MCF 10A (cell line): ENCODE measurements at regions of chr5 and their contacts with region 1.

Region 1: GRCh38 chr5:149035372-149035790 is 27.5 kb downstream of the SH3TC2 start:
- DNase-seq: peak; percentile 87
- H3K4me3 Mint-ChIP-seq: no peak overlapping the region
- H3K27ac Mint-ChIP-seq: no peak overlapping the region
- H3K4me1 Mint-ChIP-seq: peaks cover 17% of the 10 kb centered on the region
- H3K27me3 Mint-ChIP-seq: no peaks in the 10 kb centered on the region
- CTCF ChIP-seq: peak; percentile 96

Region 2: GRCh38 chr5:148740966-148741742 is 294.2 kb before region 1 on chr5:
- CTCF ChIA-PET with region 1: interaction called, 882 read pairs
- POLR2A ChIA-PET with region 1: interaction called, 31 read pairs
- intact Hi-C with region 1: loop called (anchors 1 kb)
- DNase-seq: peak; percentile 77
- H3K4me3 Mint-ChIP-seq: no peak overlapping the region
- H3K27ac Mint-ChIP-seq: no peak overlapping the region
- H3K4me1 Mint-ChIP-seq: peaks cover 5% of the 10 kb centered on the region
- H3K27me3 Mint-ChIP-seq: no peaks in the 10 kb centered on the region
- CTCF ChIP-seq: peak; percentile 88

Region 3: GRCh38 chr5:148826053-148826738 is 209.2 kb before region 1 on chr5 and contains the start of gene ADRB2:
- CTCF ChIA-PET with region 1: interaction called, 38 read pairs
- POLR2A ChIA-PET with region 1: interaction called, 7 read pairs
- intact Hi-C with region 1: no loop called
- DNase-seq: peak; percentile 99
- H3K4me3 Mint-ChIP-seq: peak within 1 kb of the TSS; percentile 90
- H3K27ac Mint-ChIP-seq: peak within 1 kb of the TSS; percentile 91
- H3K4me1 Mint-ChIP-seq: peaks cover 44% of the 10 kb centered on the region
- H3K27me3 Mint-ChIP-seq: no peaks in the 10 kb centered on the region
- CTCF ChIP-seq: no peak
- total RNA-seq, gene ADRB2: 6.9 and 9.5 TPM in 2 replicates

Region 4: DNA sequence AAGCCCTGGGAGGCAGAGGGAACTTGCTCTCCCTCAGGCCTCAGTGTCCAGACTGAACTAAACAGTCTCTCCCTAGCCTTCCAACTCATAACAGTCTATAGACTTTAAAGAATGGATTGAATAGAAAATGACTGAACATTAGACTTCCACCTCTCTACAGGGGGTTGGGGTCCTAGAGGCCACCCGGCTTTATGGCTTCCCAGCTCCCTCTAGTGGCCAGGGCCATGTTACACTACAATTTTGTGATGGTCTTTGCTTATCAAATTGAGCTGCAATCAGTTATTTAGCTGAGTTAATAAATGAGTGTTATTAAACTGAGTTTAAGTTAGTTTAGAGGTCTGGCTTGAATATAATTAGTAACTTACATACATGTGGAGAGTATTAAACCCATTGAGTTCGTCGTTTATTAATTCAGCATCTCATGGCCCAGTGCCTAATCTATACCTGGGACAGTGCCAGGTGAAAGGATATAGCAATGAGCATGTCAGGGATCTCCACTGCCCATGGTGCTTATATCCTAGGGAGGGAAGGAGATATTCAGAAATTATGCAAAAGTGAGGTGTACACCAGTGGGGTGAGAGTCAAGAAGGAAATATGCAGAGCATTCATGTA is 77.7 kb before region 1 on chr5:
- CTCF ChIA-PET with region 1: interaction called, 52 read pairs
- POLR2A ChIA-PET with region 1: no interaction called
- intact Hi-C with region 1: loop called (anchors 2 kb)
- DNase-seq: peak; percentile 71
- H3K4me3 Mint-ChIP-seq: no peak overlapping the region
- H3K27ac Mint-ChIP-seq: no peak overlapping the region
- H3K4me1 Mint-ChIP-seq: peaks cover 24% of the 10 kb centered on the region
- H3K27me3 Mint-ChIP-seq: no peaks in the 10 kb centered on the region
- CTCF ChIP-seq: peak; percentile 99

Region 5: GRCh38 chr5:148998174-148998797 is 37.1 kb before region 1 on chr5:
- CTCF ChIA-PET with region 1: interaction called, 300 read pairs
- POLR2A ChIA-PET with region 1: interaction called, 7 read pairs
- intact Hi-C with region 1: loop called (anchors 1 kb)
- DNase-seq: peak; percentile 93
- H3K4me3 Mint-ChIP-seq: no peak overlapping the region
- H3K27ac Mint-ChIP-seq: peak overlapping the region; percentile 73
- H3K4me1 Mint-ChIP-seq: peaks cover 60% of the 10 kb centered on the region
- H3K27me3 Mint-ChIP-seq: no peaks in the 10 kb centered on the region
- CTCF ChIP-seq: peak; percentile 79

Region 6: DNA sequence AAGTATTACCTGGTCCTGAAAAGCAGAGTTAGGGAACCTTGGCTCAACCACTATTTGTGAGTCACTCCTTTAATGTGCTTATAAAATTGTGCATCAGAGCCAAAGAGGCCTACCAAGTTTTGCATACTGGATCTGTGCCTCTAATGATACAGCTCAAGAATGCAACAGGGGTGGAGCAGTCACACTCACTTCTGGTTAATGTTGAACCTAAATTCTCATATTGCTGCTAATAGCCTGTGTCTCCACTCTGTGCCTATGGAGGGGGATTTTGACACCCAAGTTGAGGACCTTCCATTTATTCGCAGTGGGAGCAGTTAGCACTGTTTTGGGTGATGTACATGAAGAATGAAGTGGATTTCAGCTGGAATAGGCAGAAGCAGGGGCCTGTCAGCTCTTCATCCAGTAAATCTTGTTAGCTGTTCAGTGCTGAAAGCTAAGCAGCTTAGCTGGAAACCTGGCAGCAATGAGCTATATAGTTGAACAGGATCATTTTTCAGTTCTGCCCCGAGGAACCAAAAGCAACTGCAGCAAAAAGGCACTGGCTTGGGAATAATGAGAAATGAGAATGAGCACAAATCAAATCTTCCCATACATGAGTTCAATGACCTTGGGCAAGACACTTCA is 17.8 kb after region 1 on chr5:
- CTCF ChIA-PET with region 1: interaction called, 82 read pairs
- POLR2A ChIA-PET with region 1: interaction called, 3 read pairs
- intact Hi-C with region 1: no loop called
- DNase-seq: peak; percentile 47
- H3K4me3 Mint-ChIP-seq: no peak overlapping the region
- H3K27ac Mint-ChIP-seq: no peak overlapping the region
- H3K4me1 Mint-ChIP-seq: peaks cover 23% of the 10 kb centered on the region
- H3K27me3 Mint-ChIP-seq: no peaks in the 10 kb centered on the region
- CTCF ChIP-seq: no peak

Region 7: GRCh38 chr5:149128023-149128875 is 92.9 kb after region 1 on chr5:
- CTCF ChIA-PET with region 1: interaction called, 40 read pairs
- POLR2A ChIA-PET with region 1: no interaction called
- intact Hi-C with region 1: no loop called
- DNase-seq: peak; percentile 80
- H3K4me3 Mint-ChIP-seq: peak overlapping the region; percentile 67
- H3K27ac Mint-ChIP-seq: peak overlapping the region; percentile 84
- H3K4me1 Mint-ChIP-seq: peaks cover 73% of the 10 kb centered on the region
- H3K27me3 Mint-ChIP-seq: no peaks in the 10 kb centered on the region
- CTCF ChIP-seq: peak; percentile 87

Region 8: GRCh38 chr5:149367249-149367971 is 332.0 kb after region 1 on chr5:
- CTCF ChIA-PET with region 1: no interaction called
- POLR2A ChIA-PET with region 1: no interaction called
- intact Hi-C with region 1: no loop called
- DNase-seq: peak; percentile 87
- H3K4me3 Mint-ChIP-seq: no peak overlapping the region
- H3K27ac Mint-ChIP-seq: no peak overlapping the region
- H3K4me1 Mint-ChIP-seq: peaks cover 8% of the 10 kb centered on the region
- H3K27me3 Mint-ChIP-seq: no peaks in the 10 kb centered on the region
- CTCF ChIP-seq: peak; percentile 85